MCF 10A (cell line): ENCODE measurements at regions of chr4 and their contacts with region 1.

Region 1: GRCh38 chr4:141853091-141853764 is 216.8 kb downstream of the IL15 start:
- DNase-seq: peak; percentile 96
- H3K4me3 Mint-ChIP-seq: peak overlapping the region; percentile 33
- H3K27ac Mint-ChIP-seq: peak overlapping the region; percentile 16
- H3K4me1 Mint-ChIP-seq: peaks cover 29% of the 10 kb centered on the region
- H3K27me3 Mint-ChIP-seq: no peaks in the 10 kb centered on the region
- CTCF ChIP-seq: no peak

Region 2: DNA sequence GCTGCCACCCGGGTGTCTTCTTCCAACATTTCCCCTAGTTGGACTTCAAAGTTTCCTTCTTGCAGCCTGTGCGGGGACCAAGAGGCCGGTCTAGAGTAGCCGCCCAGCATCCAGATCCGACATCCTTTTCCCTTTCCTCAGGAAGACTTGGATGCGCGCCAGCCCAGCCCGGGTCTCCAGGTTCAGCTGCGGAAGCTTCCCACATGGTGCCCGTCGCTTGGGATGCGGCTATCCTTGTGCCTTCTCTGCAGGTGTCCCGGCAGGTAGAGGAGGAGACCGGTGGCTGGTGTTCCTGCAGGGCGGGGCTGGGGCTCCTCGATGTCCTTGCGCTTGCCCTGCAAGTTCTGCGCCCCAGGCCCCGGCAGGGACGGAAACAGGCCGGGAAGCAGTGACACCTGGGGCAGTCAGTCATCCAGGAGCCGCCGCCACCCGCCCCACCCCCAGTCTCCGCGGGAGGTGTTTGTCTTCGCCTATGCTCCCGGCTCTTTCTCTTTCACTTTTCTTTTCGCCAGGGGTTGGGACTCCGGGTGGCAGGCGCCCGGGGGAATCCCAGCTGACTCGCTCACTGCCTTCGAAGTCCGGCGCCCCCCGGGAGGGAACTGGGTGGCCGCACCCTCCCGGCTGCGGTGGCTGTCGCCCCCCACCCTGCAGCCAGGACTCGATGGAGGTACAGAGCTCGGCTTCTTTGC is 217.0 kb before region 1 on chr4 and contains the start of gene IL15:
- CTCF ChIA-PET with region 1: no interaction called
- POLR2A ChIA-PET with region 1: interaction called, 6 read pairs
- intact Hi-C with region 1: loop called (anchors 10 kb)
- DNase-seq: peak; percentile 80
- H3K4me3 Mint-ChIP-seq: peak within 1 kb of the TSS; percentile 77
- H3K27ac Mint-ChIP-seq: peak within 1 kb of the TSS; percentile 63
- H3K4me1 Mint-ChIP-seq: peaks cover 11% of the 10 kb centered on the region
- H3K27me3 Mint-ChIP-seq: no peaks in the 10 kb centered on the region
- CTCF ChIP-seq: no peak
- total RNA-seq, gene IL15: 0.51 and 1.3 TPM in 2 replicates

Region 3: DNA sequence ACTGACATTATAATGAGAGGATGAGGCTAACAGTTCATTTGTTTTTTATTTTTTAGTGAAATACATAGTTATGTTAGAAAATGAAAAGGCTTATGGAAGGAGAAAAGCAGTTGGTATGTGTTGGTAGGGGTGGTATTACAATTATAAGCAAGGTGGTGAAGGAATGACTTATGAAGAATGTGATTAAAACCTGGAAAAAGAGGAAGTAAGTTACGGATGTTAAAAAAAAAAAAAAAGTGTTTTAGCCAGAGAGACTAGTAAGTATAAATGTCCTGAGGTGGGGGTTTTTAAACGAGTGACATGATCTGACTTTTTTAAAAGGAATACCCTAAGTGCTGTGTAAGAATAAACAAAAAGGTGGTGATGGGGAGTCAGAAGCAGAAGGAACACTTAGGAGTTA is 10.1 kb before region 1 on chr4:
- CTCF ChIA-PET with region 1: no interaction called
- POLR2A ChIA-PET with region 1: interaction called, 16 read pairs
- intact Hi-C with region 1: no loop called
- DNase-seq: no peak
- H3K4me3 Mint-ChIP-seq: no peak overlapping the region
- H3K27ac Mint-ChIP-seq: no peak overlapping the region
- H3K4me1 Mint-ChIP-seq: no peaks in the 10 kb centered on the region
- H3K27me3 Mint-ChIP-seq: no peaks in the 10 kb centered on the region
- CTCF ChIP-seq: no peak

Region 4: DNA sequence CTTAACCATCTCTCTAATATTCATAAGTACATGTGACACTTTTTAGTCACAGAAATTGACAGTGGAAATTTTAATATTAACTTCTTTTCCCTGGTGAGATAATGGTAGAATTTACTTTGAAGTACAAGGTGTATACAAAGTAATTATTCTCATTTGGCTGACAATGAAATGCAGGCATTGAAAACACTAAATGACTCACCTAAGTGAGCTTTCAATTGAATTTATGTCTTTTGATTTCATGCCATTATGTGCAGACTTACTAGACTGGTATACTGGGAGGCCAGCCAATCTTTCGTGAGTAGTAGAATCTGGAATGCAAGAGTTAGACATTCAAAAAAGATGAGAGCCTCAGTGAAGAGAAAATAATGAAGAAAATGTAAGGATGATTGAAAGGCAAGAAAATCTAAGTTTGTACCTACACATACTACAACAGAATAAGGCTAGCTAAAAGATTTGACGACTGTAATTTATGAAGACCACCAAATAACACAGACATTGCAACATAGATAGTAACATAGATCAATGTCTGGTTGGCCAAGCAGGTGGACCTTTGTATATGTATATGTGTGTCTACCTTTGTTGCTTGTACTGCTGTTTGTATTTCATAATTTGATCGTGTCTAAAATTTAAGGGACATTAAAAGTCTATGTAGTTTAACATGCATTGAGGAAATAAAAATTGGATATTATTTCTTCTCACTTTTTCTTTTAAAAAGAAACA is 242.8 kb after region 1 on chr4:
- CTCF ChIA-PET with region 1: interaction called, 4 read pairs
- POLR2A ChIA-PET with region 1: interaction called, 8 read pairs
- intact Hi-C with region 1: loop called (anchors 1 kb)
- DNase-seq: peak; percentile 98
- H3K4me3 Mint-ChIP-seq: peak overlapping the region; percentile 7
- H3K27ac Mint-ChIP-seq: peak overlapping the region; percentile 86
- H3K4me1 Mint-ChIP-seq: peaks cover 27% of the 10 kb centered on the region
- H3K27me3 Mint-ChIP-seq: no peaks in the 10 kb centered on the region
- CTCF ChIP-seq: no peak